SK-N-SH (cell line): ENCODE measurements at regions of chr1 and their contacts with region 1.

Region 1: DNA sequence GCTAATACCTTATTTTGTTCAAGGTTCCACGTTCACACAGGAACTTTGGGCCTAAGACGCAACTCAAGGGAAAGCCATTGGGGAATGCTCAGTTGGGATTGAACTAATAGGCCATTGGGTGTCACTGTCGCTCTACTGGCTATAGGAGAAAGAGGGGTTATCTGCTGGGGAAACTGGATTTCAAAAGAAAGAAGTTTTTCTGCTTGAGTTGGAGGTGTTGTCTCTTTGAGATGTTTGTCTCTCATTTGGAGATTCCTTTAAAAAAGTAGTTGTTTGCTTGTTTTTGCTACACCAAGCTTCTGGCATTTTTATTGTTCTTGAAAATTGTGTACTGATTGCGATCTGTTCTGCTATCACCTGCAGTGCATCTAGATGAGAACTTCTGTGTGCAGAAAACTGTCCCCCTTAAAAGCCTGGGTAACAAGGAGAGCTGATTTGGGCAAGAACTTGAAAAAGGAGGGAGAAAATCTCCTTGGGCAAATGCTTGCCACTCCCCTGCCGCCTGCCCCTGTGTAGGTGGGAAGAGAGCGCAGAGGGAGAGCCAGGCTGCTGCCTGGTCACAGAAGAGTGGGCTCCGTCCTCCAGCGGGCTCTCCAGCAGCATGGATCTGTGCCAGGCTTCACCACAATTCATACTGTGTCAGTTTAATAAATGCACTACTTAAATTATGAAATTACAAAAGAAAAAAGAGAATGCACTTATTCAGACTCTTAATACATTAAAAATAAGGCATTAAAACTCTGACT is 39.9 kb downstream of the PEX14 start:
- DNase-seq: peak; percentile 66
- H3K4me3 ChIP-seq: no peak overlapping the region
- H3K27ac ChIP-seq: no peak overlapping the region
- H3K4me1 ChIP-seq: peaks cover 32 to 50% of the 10 kb centered on the region in 2 experiments
- H3K27me3 ChIP-seq: no peaks in the 10 kb centered on the region
- CTCF ChIP-seq: peak; percentile 80
- EP300 ChIP-seq: no peak
- RAD21 ChIP-seq: peak; percentile 92

Region 2: GRCh38 chr1:10639775-10640578 is 125.3 kb after region 1 on chr1:
- CTCF ChIA-PET with region 1: interaction called, 10 read pairs
- POLR2A ChIA-PET with region 1: no interaction called
- DNase-seq: peak; percentile 94
- H3K4me3 ChIP-seq: no peak overlapping the region
- H3K27ac ChIP-seq: peak overlapping the region in 1 of 2 experiments; percentile 87; a peak in 2 of 4 replicates
- H3K4me1 ChIP-seq: peaks cover 2 to 38% of the 10 kb centered on the region in 2 experiments; a peak in 2 of 4 replicates
- H3K27me3 ChIP-seq: no peaks in the 10 kb centered on the region
- CTCF ChIP-seq: no peak
- EP300 ChIP-seq: peak in 1 of 2 experiments; percentile 69; a peak in 2 of 4 replicates
- RAD21 ChIP-seq: peak; percentile 19

Region 3: DNA sequence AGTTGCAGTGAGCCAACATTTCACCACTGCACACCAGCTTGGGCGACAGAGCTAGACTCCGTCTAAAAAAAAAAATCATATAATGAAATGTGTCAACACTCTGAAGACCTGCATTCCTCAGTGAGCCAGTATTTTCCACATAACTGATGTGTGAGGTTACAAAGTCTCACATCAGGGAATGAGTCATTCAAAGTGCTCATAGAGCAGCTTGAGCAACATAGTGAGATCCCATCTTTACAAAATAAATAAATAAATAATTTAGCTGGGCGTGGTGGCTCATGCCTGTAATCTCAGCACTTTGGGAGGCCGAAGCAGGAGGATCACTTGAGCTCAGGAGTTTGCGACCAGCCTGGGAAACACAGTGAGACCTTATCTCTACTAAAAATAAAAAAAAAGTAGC is 216.4 kb after region 1 on chr1:
- CTCF ChIA-PET with region 1: no interaction called
- POLR2A ChIA-PET with region 1: no interaction called
- DNase-seq: no peak
- H3K4me3 ChIP-seq: no peak overlapping the region
- H3K27ac ChIP-seq: no peak overlapping the region
- H3K4me1 ChIP-seq: peaks cover 0 to 32% of the 10 kb centered on the region in 2 experiments; a peak in 2 of 4 replicates
- H3K27me3 ChIP-seq: no peaks in the 10 kb centered on the region
- CTCF ChIP-seq: no peak
- EP300 ChIP-seq: no peak
- RAD21 ChIP-seq: no peak